Psoas muscle (tissue), 8 donors: ENCODE measurements at regions of chr11 and their contacts with region 1.

Region 1: DNA sequence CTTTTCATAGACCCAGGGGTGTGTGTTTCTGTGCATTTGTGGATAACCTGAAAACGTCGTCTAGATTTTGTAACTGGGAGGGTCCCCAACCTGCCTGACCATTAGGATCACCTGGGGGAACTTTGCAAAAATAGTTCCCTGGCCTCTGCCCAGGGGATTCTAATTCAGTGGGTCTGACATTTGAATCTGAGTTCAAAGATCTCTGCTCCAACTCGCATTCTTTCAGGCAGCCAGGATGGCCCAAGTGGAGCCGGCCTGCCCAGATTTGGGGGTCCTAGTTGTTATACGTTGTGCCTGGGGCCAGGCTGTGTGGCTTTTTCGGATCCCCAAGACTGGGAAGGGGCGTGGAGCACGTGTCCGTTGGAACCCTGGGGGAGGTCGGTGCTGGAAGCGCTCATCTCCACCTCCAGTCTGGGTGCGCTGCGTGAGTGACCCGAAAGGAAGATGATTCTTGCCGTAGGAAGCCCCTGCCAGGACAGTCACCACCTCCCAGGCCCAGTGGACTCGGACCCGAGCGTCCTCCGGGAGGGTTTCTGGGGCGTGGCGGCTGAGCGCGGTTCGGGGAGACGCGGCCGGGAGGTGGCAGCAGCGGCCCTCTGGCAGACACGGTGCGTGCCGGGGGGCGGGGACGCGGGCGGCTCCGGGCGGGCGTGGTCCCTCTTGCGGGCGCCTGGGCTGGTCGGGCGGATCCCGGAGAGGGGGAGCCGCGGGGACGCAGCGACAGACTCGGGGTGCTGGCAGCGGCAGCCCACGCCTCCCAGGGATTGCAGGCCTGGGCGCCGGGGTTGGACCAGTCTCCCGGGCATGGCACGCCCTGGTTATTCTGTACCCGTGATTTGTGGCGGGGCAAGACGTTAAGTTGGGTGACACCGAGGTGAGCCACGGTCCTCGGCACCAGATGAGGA is 29.2 kb upstream of the PLET1 start:
- DNase-seq: peak; percentile 87 to 91
- ATAC-seq: peak; percentile 86 to 91 (median 89)
- H3K4me3 ChIP-seq: peak overlapping the region; percentile 81
- H3K27ac ChIP-seq: peak overlapping the region; percentile 86
- H3K4me1 ChIP-seq: peaks cover 31% of the 10 kb centered on the region
- H3K27me3 ChIP-seq: no peaks in the 10 kb centered on the region
- CTCF ChIP-seq: peak; percentile 89

Region 2: DNA sequence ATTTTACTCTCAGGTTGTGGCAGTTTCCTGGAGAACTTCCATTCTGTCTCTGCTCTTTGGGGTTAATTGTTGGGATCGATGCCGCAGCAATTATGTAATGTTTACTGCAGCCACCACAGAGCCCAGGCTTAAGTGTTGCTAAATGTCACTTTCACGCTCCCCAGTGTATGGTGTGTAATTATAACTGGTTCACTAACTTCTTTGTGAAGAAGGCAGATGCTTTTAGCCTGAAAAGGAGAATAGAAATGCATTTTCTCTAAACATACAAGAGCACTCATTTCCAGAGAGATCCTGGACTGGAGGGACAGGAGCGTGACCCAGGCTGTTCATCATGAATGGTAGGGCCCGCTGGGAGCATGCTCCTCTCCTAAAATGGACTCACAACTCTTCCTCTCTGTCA is 103.1 kb after region 1 on chr11:
- intact Hi-C with region 1: loop called in 1 of 2 experiments (anchors 10 kb)
- DNase-seq: no peak
- ATAC-seq: no peak
- H3K4me3 ChIP-seq: no peak overlapping the region
- H3K27ac ChIP-seq: no peak overlapping the region
- H3K4me1 ChIP-seq: peaks cover 24% of the 10 kb centered on the region
- H3K27me3 ChIP-seq: no peaks in the 10 kb centered on the region
- CTCF ChIP-seq: no peak

Region 3: DNA sequence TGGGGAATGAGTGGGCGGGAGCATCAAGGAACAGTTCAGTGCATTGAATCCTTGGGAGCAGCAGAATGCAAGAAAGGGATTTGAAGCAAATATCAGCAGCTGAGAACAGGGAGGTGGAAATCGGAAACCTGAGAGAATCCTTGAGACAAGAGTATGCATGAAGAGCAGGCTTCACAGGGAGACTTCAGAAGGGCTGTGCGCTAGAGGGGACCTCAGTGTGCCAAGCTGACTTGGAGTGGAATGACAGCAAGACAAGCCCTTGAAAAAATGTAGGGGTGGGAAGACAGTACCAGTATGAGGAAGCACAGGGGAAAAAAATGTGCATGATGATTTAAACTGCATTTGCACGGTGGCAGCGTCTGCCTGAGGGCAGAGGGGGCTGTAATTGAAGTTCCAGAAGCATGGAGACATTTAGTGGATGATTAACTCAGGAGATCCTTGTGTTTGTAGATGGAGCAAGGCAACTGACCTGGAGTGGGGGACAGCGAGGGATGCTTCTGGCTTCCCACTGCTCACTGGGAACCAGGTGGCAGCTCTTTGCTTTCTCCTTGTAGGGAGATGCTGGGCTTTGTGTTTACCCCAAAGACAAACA is 175.7 kb after region 1 on chr11:
- intact Hi-C with region 1: loop called (anchors 5 kb)
- DNase-seq: no peak
- ATAC-seq: no peak
- H3K4me3 ChIP-seq: no peak overlapping the region
- H3K27ac ChIP-seq: no peak overlapping the region
- H3K4me1 ChIP-seq: peaks cover 5% of the 10 kb centered on the region
- H3K27me3 ChIP-seq: peaks cover 0 to 2% (median 0%) of the 10 kb centered on the region in 3 donors
- CTCF ChIP-seq: no peak

Region 4: DNA sequence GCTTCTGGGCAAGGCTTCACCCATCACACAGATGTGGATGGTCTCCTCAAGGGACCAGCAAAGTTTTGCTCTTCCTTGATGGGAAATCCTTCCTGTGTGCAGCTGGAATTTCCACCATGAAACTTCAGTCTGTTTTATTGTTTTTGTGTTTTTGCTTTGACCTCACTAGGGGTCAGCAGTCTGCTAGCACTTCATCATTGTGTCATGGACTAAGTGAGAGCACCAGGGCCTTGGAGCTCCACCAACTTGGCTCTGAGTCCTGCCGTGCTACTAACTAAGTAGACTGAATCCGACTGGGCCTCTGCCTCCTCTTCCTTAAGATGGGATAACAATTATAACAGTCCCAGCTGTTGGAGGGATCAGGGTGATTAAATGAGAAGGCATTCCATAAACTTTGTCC is 365.5 kb after region 1 on chr11:
- intact Hi-C with region 1: loop called in 1 of 2 experiments (anchors 5 kb)
- DNase-seq: peak; percentile 77 to 91
- ATAC-seq: peak; percentile 21 to 52 (median 31)
- H3K4me3 ChIP-seq: no peak overlapping the region
- H3K27ac ChIP-seq: peak overlapping the region; percentile 14
- H3K4me1 ChIP-seq: peaks cover 66% of the 10 kb centered on the region
- H3K27me3 ChIP-seq: no peaks in the 10 kb centered on the region
- CTCF ChIP-seq: no peak

Region 5: GRCh38 chr11:113289431-113290187 is 999.8 kb after region 1 on chr11:
- intact Hi-C with region 1: loop called (anchors 5 kb)
- DNase-seq: peak; percentile 53 to 77
- ATAC-seq: peak; percentile 86 to 94 (median 88)
- H3K4me3 ChIP-seq: no peak overlapping the region
- H3K27ac ChIP-seq: no peak overlapping the region
- H3K4me1 ChIP-seq: no peaks in the 10 kb centered on the region
- H3K27me3 ChIP-seq: peaks cover 0 to 4% (median 0%) of the 10 kb centered on the region in 3 donors
- CTCF ChIP-seq: peak; percentile 89